Activated CD4-positive, alpha-beta memory T cell treated with anti-CD3 and anti-CD28 coated beads for 36 hours (primary cell): ENCODE measurements at regions of chr2 and their contacts with region 1.

Region 1: GRCh38 chr2:77713412-77713811 is 191.2 kb upstream of the LRRTM4 start:
- DNase-seq: no peak
- H3K4me3 Mint-ChIP-seq: no peak overlapping the region
- H3K27ac Mint-ChIP-seq: no peak overlapping the region
- H3K4me1 Mint-ChIP-seq: no peaks in the 10 kb centered on the region
- H3K27me3 Mint-ChIP-seq: no peaks in the 10 kb centered on the region

Region 2: DNA sequence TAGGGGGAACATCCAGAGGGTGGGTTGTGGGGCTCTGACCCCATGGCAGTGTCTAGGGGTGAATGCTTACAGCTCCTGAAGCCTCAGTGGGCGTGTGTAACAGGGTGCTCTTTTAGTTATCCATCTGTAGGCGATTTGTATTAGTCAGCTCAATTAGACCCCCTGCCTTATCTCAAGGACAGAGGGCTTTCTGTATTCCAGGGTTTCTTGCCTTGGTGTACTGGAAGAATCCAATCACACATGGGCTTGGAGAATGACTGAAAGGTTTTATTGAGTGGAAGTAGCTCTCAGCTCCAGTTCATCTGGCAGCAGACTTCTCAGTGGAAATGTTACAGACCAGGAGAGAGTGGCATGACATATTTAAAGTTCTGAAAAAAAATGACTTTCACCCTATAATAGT is 1668.7 kb before region 1 on chr2:
- CTCF ChIA-PET with region 1: no interaction called
- POLR2A ChIA-PET with region 1: no interaction called
- intact Hi-C with region 1: loop called (anchors 10 kb)
- DNase-seq: no peak
- H3K4me3 Mint-ChIP-seq: no peak overlapping the region
- H3K27ac Mint-ChIP-seq: no peak overlapping the region
- H3K4me1 Mint-ChIP-seq: no peaks in the 10 kb centered on the region
- H3K27me3 Mint-ChIP-seq: no peaks in the 10 kb centered on the region

Region 3: GRCh38 chr2:77387324-77387723 is 326.1 kb before region 1 on chr2:
- CTCF ChIA-PET with region 1: no interaction called
- POLR2A ChIA-PET with region 1: no interaction called
- intact Hi-C with region 1: no loop called
- DNase-seq: no peak
- H3K4me3 Mint-ChIP-seq: no peak overlapping the region
- H3K27ac Mint-ChIP-seq: no peak overlapping the region
- H3K4me1 Mint-ChIP-seq: no peaks in the 10 kb centered on the region
- H3K27me3 Mint-ChIP-seq: no peaks in the 10 kb centered on the region